Activated CD4-positive, alpha-beta T cell treated with anti-CD3 and anti-CD28 coated beads for 36 hours (primary cell): ENCODE measurements at regions of chr1 and their contacts with region 1.

Region 1: GRCh38 chr1:174968750-174969244 is 30.9 kb upstream of the CACYBP start:
- DNase-seq: peak; percentile 31
- ATAC-seq: peak; percentile 61
- H3K4me3 Mint-ChIP-seq: peak overlapping the region; percentile 24
- H3K27ac Mint-ChIP-seq: peak overlapping the region; percentile 70
- H3K4me1 Mint-ChIP-seq: peaks cover 67% of the 10 kb centered on the region
- H3K27me3 Mint-ChIP-seq: no peaks in the 10 kb centered on the region

Region 2: GRCh38 chr1:174800216-174800851 is 168.5 kb before region 1 on chr1:
- CTCF ChIA-PET with region 1: no interaction called
- POLR2A ChIA-PET with region 1: interaction called, 5 read pairs
- intact Hi-C with region 1: loop called (anchors 1 kb)
- DNase-seq: peak; percentile 28
- ATAC-seq: no peak
- H3K4me3 Mint-ChIP-seq: no peak overlapping the region
- H3K27ac Mint-ChIP-seq: no peak overlapping the region
- H3K4me1 Mint-ChIP-seq: peaks cover 5% of the 10 kb centered on the region
- H3K27me3 Mint-ChIP-seq: no peaks in the 10 kb centered on the region

Region 3: GRCh38 chr1:174912264-174912663 is 56.5 kb before region 1 on chr1:
- CTCF ChIA-PET with region 1: interaction called, 3 read pairs
- POLR2A ChIA-PET with region 1: no interaction called
- intact Hi-C with region 1: loop called (anchors 1 kb)
- DNase-seq: peak; percentile 65
- ATAC-seq: peak; percentile 85
- H3K4me3 Mint-ChIP-seq: no peak overlapping the region
- H3K27ac Mint-ChIP-seq: peak overlapping the region; percentile 63
- H3K4me1 Mint-ChIP-seq: peaks cover 57% of the 10 kb centered on the region
- H3K27me3 Mint-ChIP-seq: no peaks in the 10 kb centered on the region

Region 4: DNA sequence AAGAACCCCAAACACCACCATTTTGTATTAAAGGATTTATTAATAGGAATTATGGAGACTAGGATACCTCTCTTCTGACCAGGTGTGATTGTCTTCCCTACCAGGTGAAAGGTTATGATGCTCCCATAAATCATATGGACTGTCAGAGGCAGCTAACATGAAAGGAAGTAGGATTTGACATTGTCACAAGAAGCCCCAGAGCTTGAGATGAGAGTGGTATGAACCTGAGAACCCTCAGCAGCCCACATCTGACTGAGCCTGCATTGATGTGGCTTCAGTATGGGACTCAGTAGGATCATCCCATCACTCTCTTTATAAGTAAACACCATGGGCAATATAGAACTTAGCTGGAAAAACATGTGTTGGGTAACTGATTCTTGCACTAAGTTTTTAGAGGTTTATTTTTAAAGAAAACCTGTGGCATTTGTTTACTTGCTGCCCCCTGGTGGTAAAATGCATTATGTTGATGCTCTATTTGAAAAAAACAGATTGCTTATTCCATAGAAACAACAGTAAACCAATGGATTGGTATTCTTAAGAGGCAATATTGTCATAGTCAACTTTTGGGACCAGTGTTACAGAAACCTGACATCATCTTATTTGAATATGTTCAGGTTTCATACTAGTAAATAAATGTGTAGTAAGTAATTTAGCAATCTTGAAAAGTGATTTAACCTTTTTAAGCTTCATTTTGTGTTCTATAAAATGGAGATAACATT is 14.3 kb after region 1 on chr1:
- CTCF ChIA-PET with region 1: interaction called, 8 read pairs
- POLR2A ChIA-PET with region 1: interaction called, 3 read pairs
- intact Hi-C with region 1: loop called (anchors 1 to 2 kb)
- DNase-seq: peak; percentile 44
- ATAC-seq: peak; percentile 39
- H3K4me3 Mint-ChIP-seq: no peak overlapping the region
- H3K27ac Mint-ChIP-seq: no peak overlapping the region
- H3K4me1 Mint-ChIP-seq: peaks cover 19% of the 10 kb centered on the region
- H3K27me3 Mint-ChIP-seq: no peaks in the 10 kb centered on the region

Region 5: GRCh38 chr1:175400766-175401165 is 432.0 kb after region 1 on chr1:
- CTCF ChIA-PET with region 1: no interaction called
- POLR2A ChIA-PET with region 1: no interaction called
- intact Hi-C with region 1: no loop called
- DNase-seq: no peak
- ATAC-seq: no peak
- H3K4me3 Mint-ChIP-seq: no peak overlapping the region
- H3K27ac Mint-ChIP-seq: no peak overlapping the region
- H3K4me1 Mint-ChIP-seq: no peaks in the 10 kb centered on the region
- H3K27me3 Mint-ChIP-seq: peaks cover 10% of the 10 kb centered on the region